CD8-positive, alpha-beta memory T cell (primary cell): ENCODE measurements at regions of chr5 and their contacts with region 1.

Region 1: DNA sequence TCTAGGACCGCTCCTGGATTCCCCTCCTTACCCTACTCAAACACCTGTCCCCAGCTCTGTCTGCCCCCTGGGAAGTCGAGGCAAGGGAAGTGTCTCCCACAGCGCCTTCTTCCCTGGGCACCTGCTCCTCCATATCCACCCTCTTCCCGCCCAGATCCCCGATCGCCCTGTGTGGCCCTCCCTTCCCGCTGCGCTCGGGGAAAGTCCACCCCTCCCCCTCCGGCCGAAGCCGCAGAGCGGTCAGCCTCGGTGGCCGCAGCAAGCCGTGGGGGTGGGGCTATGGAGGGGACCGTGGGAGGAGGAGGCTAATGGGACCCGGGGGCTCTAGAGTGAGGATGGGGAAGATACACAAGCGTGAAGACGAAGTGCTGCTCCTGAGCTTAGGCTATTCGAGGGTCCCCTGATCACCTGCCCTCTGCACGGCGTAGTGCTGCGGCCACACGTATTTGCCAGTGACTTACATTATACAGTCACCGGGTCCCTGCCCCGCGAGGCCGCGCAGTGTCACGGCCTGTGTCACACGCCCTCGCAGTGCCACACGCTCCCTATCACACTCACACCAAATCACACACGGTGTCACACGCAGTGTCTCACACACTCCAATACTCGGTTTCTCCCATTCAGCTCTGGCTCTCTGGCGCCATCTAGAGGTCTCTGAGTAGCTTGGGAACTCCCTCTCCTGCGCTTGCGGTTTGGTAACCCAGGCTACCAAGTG is 658 bp upstream of the PCDH1 start:
- DNase-seq: peak; percentile 83 to 94 (median 84)
- H3K4me3 ChIP-seq: peak overlapping the region; percentile 75
- H3K4me3 Mint-ChIP-seq: peak overlapping the region; percentile 71 to 89 (median 83)
- H3K27ac ChIP-seq: no peak overlapping the region
- H3K27ac Mint-ChIP-seq: peak overlapping the region in 5 of 8 donors; percentile 13 to 87 (median 47)
- H3K4me1 ChIP-seq: peaks cover 27% of the 10 kb centered on the region
- H3K4me1 Mint-ChIP-seq: peaks cover 22 to 39% (median 31%) of the 10 kb centered on the region in 3 donors
- H3K27me3 ChIP-seq: peaks cover 78% of the 10 kb centered on the region
- H3K27me3 Mint-ChIP-seq: peaks cover 74 to 78% of the 10 kb centered on the region in 2 donors

Region 2: GRCh38 chr5:141681695-141682641 is 196.9 kb before region 1 on chr5 and contains the start of gene ARAP3:
- CTCF ChIA-PET with region 1: interaction called, 36 read pairs
- POLR2A ChIA-PET with region 1: interaction called, 3 read pairs
- DNase-seq: peak in 4 of 5 donors; percentile 17 to 64 (median 39)
- H3K4me3 ChIP-seq: peak within 1 kb of the TSS; percentile 50
- H3K4me3 Mint-ChIP-seq: peak within 1 kb of the TSS; percentile 65 to 91 (median 84)
- H3K27ac ChIP-seq: peak within 1 kb of the TSS; percentile 38
- H3K27ac Mint-ChIP-seq: peak within 1 kb of the TSS; percentile 7 to 93 (median 78)
- H3K4me1 ChIP-seq: peaks cover 27% of the 10 kb centered on the region
- H3K4me1 Mint-ChIP-seq: peaks cover 25 to 46% (median 29%) of the 10 kb centered on the region in 3 donors
- H3K27me3 ChIP-seq: no peaks in the 10 kb centered on the region
- H3K27me3 Mint-ChIP-seq: peaks cover 0 to 4% of the 10 kb centered on the region in 2 donors
- total RNA-seq, gene ARAP3: 6.9 to 7.9 TPM

Region 3: GRCh38 chr5:141701360-141702119 is 177.3 kb before region 1 on chr5:
- CTCF ChIA-PET with region 1: interaction called, 184 read pairs
- POLR2A ChIA-PET with region 1: interaction called, 17 read pairs
- DNase-seq: no peak
- H3K4me3 ChIP-seq: peak overlapping the region; percentile 16
- H3K4me3 Mint-ChIP-seq: peak overlapping the region in 4 of 7 donors; percentile 11 to 91 (median 62)
- H3K27ac ChIP-seq: no peak overlapping the region
- H3K27ac Mint-ChIP-seq: peak overlapping the region in 6 of 8 donors; percentile 20 to 98 (median 63)
- H3K4me1 ChIP-seq: peaks cover 12% of the 10 kb centered on the region
- H3K4me1 Mint-ChIP-seq: peaks cover 12 to 20% (median 13%) of the 10 kb centered on the region in 3 donors
- H3K27me3 ChIP-seq: peaks cover 18% of the 10 kb centered on the region
- H3K27me3 Mint-ChIP-seq: peaks cover 25 to 40% of the 10 kb centered on the region in 2 donors

Region 4: GRCh38 chr5:141793881-141794280 is 85.0 kb before region 1 on chr5:
- CTCF ChIA-PET with region 1: no interaction called
- POLR2A ChIA-PET with region 1: no interaction called
- DNase-seq: no peak
- H3K4me3 ChIP-seq: no peak overlapping the region
- H3K4me3 Mint-ChIP-seq: no peak overlapping the region
- H3K27ac ChIP-seq: no peak overlapping the region
- H3K27ac Mint-ChIP-seq: no peak overlapping the region
- H3K4me1 ChIP-seq: no peaks in the 10 kb centered on the region
- H3K4me1 Mint-ChIP-seq: no peaks in the 10 kb centered on the region
- H3K27me3 ChIP-seq: no peaks in the 10 kb centered on the region
- H3K27me3 Mint-ChIP-seq: peaks cover 12 to 14% of the 10 kb centered on the region in 2 donors

Region 5: GRCh38 chr5:141825791-141826560 is 52.9 kb before region 1 on chr5:
- CTCF ChIA-PET with region 1: interaction called, 10 read pairs
- POLR2A ChIA-PET with region 1: no interaction called
- DNase-seq: no peak
- H3K4me3 ChIP-seq: no peak overlapping the region
- H3K4me3 Mint-ChIP-seq: no peak overlapping the region
- H3K27ac ChIP-seq: no peak overlapping the region
- H3K27ac Mint-ChIP-seq: no peak overlapping the region
- H3K4me1 ChIP-seq: no peaks in the 10 kb centered on the region
- H3K4me1 Mint-ChIP-seq: no peaks in the 10 kb centered on the region
- H3K27me3 ChIP-seq: no peaks in the 10 kb centered on the region
- H3K27me3 Mint-ChIP-seq: peaks cover 1 to 13% of the 10 kb centered on the region in 2 donors

Region 6: DNA sequence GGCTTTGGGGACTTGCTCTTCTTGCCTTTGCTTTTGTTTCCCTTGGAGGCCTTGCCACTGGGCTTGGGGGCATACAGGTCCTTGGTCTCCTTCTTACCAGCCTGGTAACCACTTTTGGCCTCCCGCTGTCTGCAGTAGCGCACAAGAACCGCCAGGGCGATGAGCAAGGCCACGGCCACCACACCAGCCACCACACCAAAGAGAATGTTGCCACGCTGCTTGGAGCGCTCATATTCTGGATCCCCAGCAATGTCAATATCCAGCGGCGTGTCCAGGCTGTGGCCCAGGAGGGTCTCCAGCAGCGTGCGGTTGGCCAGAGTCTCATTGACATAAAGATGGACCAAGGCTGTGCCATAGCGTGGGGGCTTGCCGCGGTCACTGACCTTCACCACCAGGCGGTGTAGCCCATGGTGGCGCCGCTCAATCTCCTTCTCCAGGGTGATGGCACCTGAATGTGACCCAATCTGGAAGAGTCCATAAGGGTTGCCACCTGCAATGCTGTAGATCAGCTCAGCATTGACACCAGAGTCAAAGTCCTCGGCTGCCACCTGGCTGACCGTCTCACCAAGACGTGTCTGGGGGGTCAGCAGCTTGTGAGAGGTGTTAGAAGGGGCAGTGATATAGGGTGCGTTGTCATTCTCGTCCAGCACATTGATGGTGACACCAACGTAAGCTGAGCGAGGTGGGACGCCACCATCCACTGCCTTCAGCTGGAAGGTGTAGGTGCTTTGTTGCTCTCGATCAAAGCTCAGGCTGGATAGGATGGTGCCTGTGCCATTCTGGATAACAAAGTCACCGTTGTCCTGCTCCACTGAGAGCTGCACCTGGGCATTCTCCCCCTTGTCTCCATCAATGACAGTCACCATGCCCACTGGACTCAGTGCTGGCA is 15.1 kb before region 1 on chr5:
- CTCF ChIA-PET with region 1: interaction called, 13 read pairs
- POLR2A ChIA-PET with region 1: no interaction called
- DNase-seq: no peak
- H3K4me3 ChIP-seq: no peak overlapping the region
- H3K4me3 Mint-ChIP-seq: no peak overlapping the region
- H3K27ac ChIP-seq: no peak overlapping the region
- H3K27ac Mint-ChIP-seq: peak overlapping the region in 1 of 8 donors; percentile 55
- H3K4me1 ChIP-seq: no peaks in the 10 kb centered on the region
- H3K4me1 Mint-ChIP-seq: no peaks in the 10 kb centered on the region
- H3K27me3 ChIP-seq: peaks cover 4% of the 10 kb centered on the region
- H3K27me3 Mint-ChIP-seq: peaks cover 13 to 32% of the 10 kb centered on the region in 2 donors

Region 7: DNA sequence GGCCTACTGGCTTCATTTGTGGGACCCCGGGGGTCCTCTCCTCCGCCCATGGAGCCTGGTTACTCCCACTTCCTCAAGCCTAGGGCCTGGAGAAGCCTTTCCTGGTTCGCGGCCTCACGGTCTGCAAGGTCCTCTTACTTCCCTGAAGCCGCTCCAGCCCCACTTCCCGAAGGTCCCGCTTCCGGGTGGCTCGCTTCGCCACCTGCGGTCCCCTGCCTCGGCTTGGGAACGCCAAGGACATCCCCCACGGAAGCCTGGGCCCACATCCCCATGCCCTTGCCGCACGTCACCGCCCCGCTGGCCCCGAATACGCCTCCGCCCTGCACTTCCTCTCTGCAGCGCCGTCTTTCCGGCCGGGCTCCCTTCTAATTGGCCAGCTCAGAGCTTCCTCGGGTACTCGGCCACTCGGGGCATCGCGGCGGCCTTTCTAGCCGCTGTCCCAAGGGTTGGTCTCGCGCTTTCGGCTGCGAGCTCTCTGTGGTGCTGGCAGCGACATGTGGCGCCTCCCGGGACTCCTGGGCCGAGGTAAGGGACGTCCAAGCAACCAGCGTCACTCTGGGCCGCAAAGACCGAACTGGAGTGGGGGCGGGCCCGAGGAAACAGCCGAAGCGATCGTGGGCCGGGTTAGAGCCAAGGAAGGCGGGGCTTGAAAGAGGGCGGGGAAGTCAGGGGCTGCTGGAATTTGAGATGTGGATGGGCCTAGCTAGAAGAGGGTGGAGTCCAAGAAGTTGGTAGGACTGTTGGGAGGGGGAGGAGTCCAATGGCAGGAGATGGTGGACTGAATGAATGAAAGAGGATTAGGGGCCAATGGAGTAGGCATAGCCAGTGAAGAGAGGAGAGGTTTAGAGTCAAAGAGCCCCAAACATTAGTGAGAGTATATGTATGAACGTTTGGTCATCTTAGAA is 44.8 kb after region 1 on chr5 and contains the start of gene DELE1:
- CTCF ChIA-PET with region 1: interaction called, 16 read pairs
- POLR2A ChIA-PET with region 1: no interaction called
- DNase-seq: peak; percentile 83 to 93 (median 88)
- H3K4me3 ChIP-seq: peak within 1 kb of the TSS; percentile 92
- H3K4me3 Mint-ChIP-seq: peak within 1 kb of the TSS; percentile 80 to 98 (median 90)
- H3K27ac ChIP-seq: peak within 1 kb of the TSS; percentile 97
- H3K27ac Mint-ChIP-seq: peak within 1 kb of the TSS; percentile 92 to 99 (median 98)
- H3K4me1 ChIP-seq: peaks cover 15% of the 10 kb centered on the region
- H3K4me1 Mint-ChIP-seq: peaks cover 16 to 47% (median 37%) of the 10 kb centered on the region in 3 donors
- H3K27me3 ChIP-seq: no peaks in the 10 kb centered on the region
- H3K27me3 Mint-ChIP-seq: no peaks in the 10 kb centered on the region
- total RNA-seq, gene DELE1: 48.8 to 50.2 TPM